Heart left ventricle (tissue), 16 donors: ENCODE measurements at regions of chr19 and their contacts with region 1.

Region 1: DNA sequence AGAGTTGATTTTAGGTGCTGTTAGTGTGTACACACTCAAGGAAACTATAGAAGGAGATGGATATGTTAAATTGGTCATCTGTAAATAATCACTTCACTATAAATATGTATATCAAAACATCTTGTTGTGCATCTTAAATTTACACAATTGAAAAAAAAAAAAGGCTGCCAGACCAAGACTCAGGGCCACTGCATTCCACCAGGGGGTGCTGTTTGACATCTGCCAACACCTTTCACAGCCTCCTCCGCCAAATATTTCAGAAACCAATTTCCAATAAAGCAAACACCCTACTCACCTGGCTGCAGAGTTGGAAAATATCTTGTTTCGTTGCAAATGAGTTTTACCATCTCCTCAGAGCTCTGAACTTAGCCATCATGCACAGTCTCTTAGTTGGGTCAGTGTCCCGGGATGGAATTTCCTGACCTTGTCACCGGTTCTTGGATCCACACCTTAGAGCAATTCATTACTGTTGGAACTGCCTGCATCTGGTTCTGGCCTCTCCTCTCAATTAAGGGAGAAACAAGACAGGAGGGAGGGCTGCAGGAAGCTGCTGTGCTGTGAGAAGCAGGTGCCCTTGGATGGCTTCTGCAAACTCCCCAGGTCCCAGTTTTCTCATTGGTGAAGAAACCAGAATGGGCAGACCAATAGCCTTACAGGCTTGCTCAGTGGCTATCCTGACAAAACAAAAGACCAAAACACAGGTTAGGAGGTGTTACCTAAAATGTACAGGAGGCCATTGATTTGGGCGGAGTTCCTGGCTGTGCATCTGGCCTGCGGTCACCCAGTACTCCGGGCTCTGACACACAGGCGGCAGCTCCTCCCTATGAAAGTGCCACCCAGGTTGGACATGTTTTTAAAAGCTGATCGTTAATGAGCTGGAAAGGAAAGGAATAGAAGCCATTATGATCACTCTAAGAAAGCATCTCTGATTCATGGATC is 746.6 kb downstream of the UQCRFS1 start:
- DNase-seq: peak; percentile 30 to 72 (median 51)
- ATAC-seq: peak in 1 of 4 donors; percentile 46
- H3K4me3 ChIP-seq: no peak overlapping the region
- H3K27ac ChIP-seq: no peak overlapping the region
- H3K4me1 ChIP-seq: peaks cover 0 to 10% (median 0%) of the 10 kb centered on the region in 12 donors
- H3K27me3 ChIP-seq: peaks cover 0 to 21% (median 0%) of the 10 kb centered on the region in 9 donors
- CTCF ChIP-seq: peak; percentile 68 to 82 (median 78)
- POLR2A ChIP-seq: no peak

Region 2: DNA sequence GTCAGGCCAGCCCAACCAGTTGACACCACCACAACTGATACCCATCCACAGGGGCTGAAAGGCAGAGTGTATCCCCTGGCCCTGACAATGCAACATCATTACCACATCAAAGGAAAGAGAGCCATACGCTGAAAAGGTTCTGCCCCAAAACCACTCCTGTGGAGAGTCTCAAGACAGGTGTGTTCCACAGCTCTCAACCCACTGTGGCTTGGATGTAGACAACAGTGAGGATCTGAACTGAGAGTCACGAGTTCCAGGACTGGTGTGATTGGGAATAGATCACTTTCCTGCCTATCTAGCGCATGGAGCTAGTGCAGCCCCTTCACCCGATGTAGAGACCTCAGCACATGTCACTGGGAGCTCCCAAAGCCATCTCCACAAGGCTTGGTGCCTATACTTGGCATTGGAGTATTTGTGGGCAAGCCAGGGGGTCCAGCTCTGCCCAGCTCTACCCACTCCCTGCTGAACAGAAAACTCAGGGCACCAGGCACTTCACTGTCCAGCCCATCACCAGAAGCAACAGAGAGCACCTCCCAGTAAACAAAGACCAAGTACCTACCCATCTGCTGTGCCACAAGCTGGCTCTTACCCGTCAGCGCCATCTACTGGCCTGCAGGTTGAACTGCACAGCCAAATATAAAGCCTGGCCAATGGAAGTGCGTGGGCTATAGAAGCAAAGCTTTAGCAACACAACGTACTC is 167.1 kb after region 1 on chr19:
- intact Hi-C with region 1: loop called in 9 of 10 experiments (anchors 1 to 10 kb)
- DNase-seq: peak in 1 of 5 donors; percentile 28
- ATAC-seq: peak in 2 of 4 donors; percentile 57 to 79
- H3K4me3 ChIP-seq: no peak overlapping the region
- H3K27ac ChIP-seq: no peak overlapping the region
- H3K4me1 ChIP-seq: no peaks in the 10 kb centered on the region
- H3K27me3 ChIP-seq: peaks cover 0 to 5% (median 0%) of the 10 kb centered on the region in 9 donors
- CTCF ChIP-seq: peak; percentile 47 to 74 (median 66)
- POLR2A ChIP-seq: no peak

Region 3: DNA sequence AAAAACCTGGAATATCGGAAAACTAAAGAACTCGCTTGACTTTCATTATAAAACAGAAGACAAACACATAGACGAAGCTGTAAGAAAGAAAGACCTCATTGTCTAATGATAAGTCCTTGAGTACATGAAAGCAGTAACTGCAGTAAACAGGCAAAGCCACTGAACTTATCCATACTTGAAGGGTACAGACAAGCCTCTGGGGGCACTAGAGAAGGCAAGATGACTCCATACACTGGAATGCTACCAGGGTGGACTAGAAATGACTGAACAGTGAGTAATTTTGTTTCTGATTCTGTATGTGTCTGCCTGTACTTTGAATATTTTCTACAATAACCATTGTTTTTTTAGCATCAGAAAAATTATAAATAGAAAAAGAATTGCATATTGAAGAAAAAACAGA is 238.6 kb after region 1 on chr19:
- intact Hi-C with region 1: loop called (anchors 1 to 10 kb)
- DNase-seq: no peak
- ATAC-seq: no peak
- H3K4me3 ChIP-seq: no peak overlapping the region
- H3K27ac ChIP-seq: no peak overlapping the region
- H3K4me1 ChIP-seq: no peaks in the 10 kb centered on the region
- H3K27me3 ChIP-seq: peaks cover 0 to 5% (median 0%) of the 10 kb centered on the region in 9 donors
- CTCF ChIP-seq: no peak
- POLR2A ChIP-seq: no peak

Region 4: DNA sequence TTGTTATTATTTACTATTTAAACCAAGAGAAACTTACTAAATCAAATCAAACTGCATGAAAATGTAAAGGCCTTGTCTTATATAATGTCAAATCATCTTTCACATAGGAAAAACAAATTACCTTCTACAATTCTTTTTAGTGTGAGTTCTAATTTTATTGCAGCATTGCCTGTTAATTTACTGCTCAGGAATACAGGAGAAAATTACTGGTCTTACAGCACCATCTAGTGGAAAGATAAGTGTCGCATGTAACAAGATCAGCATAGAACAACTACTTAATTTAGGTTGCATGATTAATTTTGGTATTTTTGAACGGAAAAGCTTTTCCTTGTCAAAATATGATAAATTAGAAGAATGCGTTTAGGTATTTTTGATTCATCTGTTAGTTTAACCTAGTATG is 243.9 kb after region 1 on chr19:
- intact Hi-C with region 1: loop called (anchors 1 to 10 kb)
- DNase-seq: no peak
- ATAC-seq: no peak
- H3K4me3 ChIP-seq: no peak overlapping the region
- H3K27ac ChIP-seq: no peak overlapping the region
- H3K4me1 ChIP-seq: no peaks in the 10 kb centered on the region
- H3K27me3 ChIP-seq: peaks cover 0 to 10% (median 0%) of the 10 kb centered on the region in 9 donors
- CTCF ChIP-seq: peak; percentile 43 to 77 (median 70)
- POLR2A ChIP-seq: no peak

Region 5: GRCh38 chr19:28878862-28879566 is 412.6 kb after region 1 on chr19:
- intact Hi-C with region 1: loop called (anchors 2 to 10 kb)
- DNase-seq: peak; percentile 42 to 75 (median 67)
- ATAC-seq: peak in 3 of 4 donors; percentile 23 to 40 (median 23)
- H3K4me3 ChIP-seq: no peak overlapping the region
- H3K27ac ChIP-seq: no peak overlapping the region
- H3K4me1 ChIP-seq: peaks cover 0 to 15% (median 5%) of the 10 kb centered on the region in 12 donors
- H3K27me3 ChIP-seq: no peaks in the 10 kb centered on the region
- CTCF ChIP-seq: peak; percentile 53 to 84 (median 73)
- POLR2A ChIP-seq: no peak